AG04450 (cell line): ENCODE measurements at regions of chr5 and their contacts with region 1.

Region 1: GRCh38 chr5:68272289-68272688 is 56.7 kb downstream of the PIK3R1 start:
- DNase-seq: no peak
- H3K4me3 ChIP-seq: no peak overlapping the region
- H3K27ac ChIP-seq: no peak overlapping the region
- H3K27me3 ChIP-seq: no peaks in the 10 kb centered on the region
- CTCF ChIP-seq: peak; percentile 40; the same call in 1 of the 2 replicates

Region 2: DNA sequence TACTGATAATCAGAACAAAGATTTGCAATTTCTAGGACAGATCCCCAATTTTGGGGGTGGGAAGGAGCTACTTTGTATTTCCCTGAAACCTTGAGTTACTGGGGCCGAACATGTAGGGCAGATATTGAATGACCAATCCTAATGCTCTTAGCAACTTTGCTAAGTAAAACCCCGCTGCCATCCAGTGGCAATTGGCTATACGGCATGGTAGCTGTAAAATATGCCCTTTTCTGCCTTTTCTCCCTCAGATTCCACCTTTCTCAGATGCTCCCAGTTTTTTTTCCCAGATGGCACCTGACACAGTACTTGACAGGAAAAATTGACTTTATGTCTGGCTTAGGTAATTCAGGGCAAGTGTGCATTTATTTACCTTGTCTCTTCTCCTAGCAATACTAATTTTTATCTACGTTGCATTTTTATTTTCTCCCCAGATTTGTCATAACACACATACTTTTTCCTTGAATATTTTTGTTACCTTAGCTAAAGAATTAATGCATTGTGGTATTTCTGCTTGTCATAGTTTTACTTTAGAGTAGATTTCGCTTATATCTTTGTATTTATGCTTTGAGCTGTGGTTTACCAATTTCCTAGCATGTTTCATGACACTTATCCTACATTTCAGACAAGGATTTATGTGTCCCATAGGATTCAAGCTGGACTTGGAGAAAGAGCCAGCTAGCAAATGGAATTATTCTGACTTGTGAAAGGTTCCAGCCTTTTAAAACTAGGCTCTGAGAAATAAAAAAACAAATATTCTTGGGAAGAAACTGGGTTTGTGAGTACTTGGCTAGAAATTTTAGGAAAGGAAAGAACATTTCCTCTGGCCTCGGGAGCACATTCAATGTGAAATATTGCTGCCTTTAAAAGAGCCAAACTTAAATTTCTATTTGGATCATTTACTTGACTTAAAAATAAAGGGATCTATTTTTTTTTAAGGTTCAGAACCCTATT is 19.3 kb before region 1 on chr5:
- CTCF ChIA-PET with region 1: interaction called, 15 read pairs
- POLR2A ChIA-PET with region 1: no interaction called
- DNase-seq: peak; percentile 42
- H3K4me3 ChIP-seq: no peak overlapping the region
- H3K27ac ChIP-seq: no peak overlapping the region
- H3K27me3 ChIP-seq: no peaks in the 10 kb centered on the region
- CTCF ChIP-seq: peak; percentile 93

Region 3: DNA sequence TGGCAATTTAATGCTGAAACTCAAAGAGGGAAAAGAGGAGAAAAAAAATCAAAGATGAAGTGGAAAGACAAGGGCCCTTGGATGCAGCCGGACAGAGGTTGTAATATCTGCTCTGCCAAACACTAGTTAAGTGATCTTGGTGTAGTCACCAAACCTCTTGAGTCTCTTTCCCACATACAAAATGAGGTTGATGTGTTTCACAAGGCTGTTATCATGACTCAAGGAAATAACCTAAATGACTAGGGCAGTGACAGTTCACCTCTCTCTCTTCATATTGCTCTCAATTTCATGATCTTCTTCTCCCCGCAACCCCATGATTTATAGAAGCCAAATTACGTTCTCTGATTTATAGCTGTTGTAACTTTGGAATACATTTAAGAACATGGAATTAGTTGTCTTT is 11.8 kb before region 1 on chr5:
- CTCF ChIA-PET with region 1: interaction called, 10 read pairs
- POLR2A ChIA-PET with region 1: no interaction called
- DNase-seq: no peak
- H3K4me3 ChIP-seq: no peak overlapping the region
- H3K27ac ChIP-seq: no peak overlapping the region
- H3K27me3 ChIP-seq: no peaks in the 10 kb centered on the region
- CTCF ChIP-seq: no peak